ENCODE measurements at regions of chr7 and their contacts with region 1.

Region 1: GRCh38 chr7:75662579-75663301 is 76.0 kb downstream of the HIP1 start:
- DNase-seq: no peak
- H3K4me3 ChIP-seq: no peak overlapping the region
- H3K27ac ChIP-seq: peak overlapping the region in 1 of 5 donors; percentile 34
- H3K4me1 ChIP-seq: no peaks in the 10 kb centered on the region
- H3K27me3 ChIP-seq: no peaks in the 10 kb centered on the region
- CTCF ChIP-seq: no peak
- EP300 ChIP-seq: no peak
- POLR2A ChIP-seq: no peak

Region 2: GRCh38 chr7:75584354-75584753 is 78.4 kb before region 1 on chr7:
- intact Hi-C with region 1: no loop called
- DNase-seq: no peak
- H3K4me3 ChIP-seq: no peak overlapping the region
- H3K27ac ChIP-seq: no peak overlapping the region
- H3K4me1 ChIP-seq: no peaks in the 10 kb centered on the region
- H3K27me3 ChIP-seq: no peaks in the 10 kb centered on the region
- CTCF ChIP-seq: no peak
- EP300 ChIP-seq: no peak
- POLR2A ChIP-seq: no peak

Region 3: GRCh38 chr7:75727881-75728592 is 65.3 kb after region 1 on chr7:
- intact Hi-C with region 1: loop called (anchors 10 kb)
- DNase-seq: peak; percentile 68 to 90
- H3K4me3 ChIP-seq: peak overlapping the region in 1 of 4 donors; percentile 9
- H3K27ac ChIP-seq: peak overlapping the region; percentile 52 to 80 (median 73)
- H3K4me1 ChIP-seq: peaks cover 6 to 16% (median 13%) of the 10 kb centered on the region in 4 donors
- H3K27me3 ChIP-seq: no peaks in the 10 kb centered on the region
- CTCF ChIP-seq: no peak
- EP300 ChIP-seq: no peak
- POLR2A ChIP-seq: no peak

Region 4: DNA sequence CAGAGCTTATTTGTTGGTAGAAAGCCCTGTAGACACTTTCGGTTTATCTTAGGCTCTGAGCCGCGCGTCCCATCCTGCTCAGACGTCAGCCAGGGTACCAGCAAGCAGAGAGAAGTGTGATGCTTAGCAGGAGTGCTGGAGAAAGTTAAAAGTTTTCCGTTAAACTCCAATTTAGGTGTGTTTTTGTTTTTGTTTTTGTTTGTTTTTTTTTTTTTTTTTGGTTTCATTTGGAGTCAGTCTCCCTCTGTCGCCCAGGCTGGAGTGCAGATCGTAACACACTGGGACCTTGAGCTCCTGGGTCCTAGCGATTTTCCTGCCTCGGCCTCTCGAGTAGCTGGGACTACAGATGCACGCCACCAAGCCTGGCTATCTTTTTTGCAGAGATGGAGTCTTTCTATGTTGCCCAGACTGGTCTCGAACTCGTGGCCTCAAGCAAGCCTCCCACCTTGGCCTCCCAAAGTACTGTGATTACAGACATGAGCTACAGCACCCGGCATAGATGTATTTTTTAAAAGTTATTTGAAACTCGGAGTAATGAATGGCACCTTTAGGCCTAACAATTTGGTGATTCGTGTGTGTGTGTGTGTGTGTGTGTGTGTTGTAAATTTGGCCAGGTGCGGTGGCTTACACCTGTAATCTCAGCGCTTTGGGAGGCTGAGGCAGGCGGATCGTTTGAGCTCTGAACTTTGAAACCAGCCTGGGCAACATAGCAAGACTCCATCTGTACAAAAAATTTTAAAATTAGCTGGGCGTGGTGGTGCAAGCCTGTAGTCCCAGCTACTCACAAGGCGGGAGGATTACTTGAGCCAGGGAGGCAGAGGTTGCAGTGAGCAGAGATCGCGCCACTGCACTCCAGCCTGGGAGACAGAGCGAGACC is 77.3 kb after region 1 on chr7:
- intact Hi-C with region 1: no loop called
- DNase-seq: peak in 1 of 2 donors; percentile 77
- H3K4me3 ChIP-seq: peak overlapping the region; percentile 82 to 99 (median 90)
- H3K27ac ChIP-seq: peak overlapping the region; percentile 74 to 91 (median 90)
- H3K4me1 ChIP-seq: peaks cover 6 to 36% (median 24%) of the 10 kb centered on the region in 4 donors
- H3K27me3 ChIP-seq: no peaks in the 10 kb centered on the region
- CTCF ChIP-seq: no peak
- EP300 ChIP-seq: no peak
- POLR2A ChIP-seq: no peak

Region 5: GRCh38 chr7:75994388-75995051 is 331.8 kb after region 1 on chr7 and contains the start of gene TMEM120A:
- intact Hi-C with region 1: no loop called
- DNase-seq: peak; percentile 98
- H3K4me3 ChIP-seq: peak within 1 kb of the TSS; percentile 79 to 94 (median 91)
- H3K27ac ChIP-seq: peak within 1 kb of the TSS; percentile 95 to 98 (median 97)
- H3K4me1 ChIP-seq: peaks cover 27 to 53% (median 35%) of the 10 kb centered on the region in 4 donors
- H3K27me3 ChIP-seq: no peaks in the 10 kb centered on the region
- CTCF ChIP-seq: peak in 4 of 7 experiments; percentile 2 to 35 (median 16)
- EP300 ChIP-seq: no peak
- POLR2A ChIP-seq: peak in 2 of 4 donors; percentile 6 to 75
- total RNA-seq, gene TMEM120A: 4.1 to 75.3 (median 24.2) TPM